ENCODE measurements at regions of chr12 and their contacts with region 1.

Region 1: GRCh38 chr12:14167005-14167628 is 185.7 kb upstream of the GRIN2B start:
- DNase-seq: no peak
- ATAC-seq: peak; percentile 70
- H3K4me3 ChIP-seq: no peak overlapping the region
- H3K27ac ChIP-seq: no peak overlapping the region
- H3K4me1 ChIP-seq: peaks cover 5% of the 10 kb centered on the region
- H3K27me3 ChIP-seq: no peaks in the 10 kb centered on the region
- CTCF ChIP-seq: peak; percentile 88 to 97 (median 94)
- EP300 ChIP-seq: no peak
- POLR2A ChIP-seq: no peak
- RAD21 ChIP-seq: peak; percentile 100

Region 2: GRCh38 chr12:13278249-13278787 is 888.8 kb before region 1 on chr12:
- CTCF ChIA-PET with region 1: interaction called, 7 read pairs
- POLR2A ChIA-PET with region 1: no interaction called
- RAD21 ChIA-PET with region 1: interaction called, 3 read pairs
- SMC1A ChIA-PET with region 1: no interaction called
- in situ Hi-C with region 1: no loop called
- intact Hi-C with region 1: loop called (anchors 5 kb)
- DNase-seq: no peak
- ATAC-seq: peak; percentile 93
- H3K4me3 ChIP-seq: no peak overlapping the region
- H3K27ac ChIP-seq: no peak overlapping the region
- H3K4me1 ChIP-seq: no peaks in the 10 kb centered on the region
- H3K27me3 ChIP-seq: peaks cover 0 to 7% of the 10 kb centered on the region in 2 experiments; a peak in 2 of 4 replicates
- CTCF ChIP-seq: peak; percentile 68 to 85 (median 75)
- EP300 ChIP-seq: no peak
- POLR2A ChIP-seq: no peak
- RAD21 ChIP-seq: peak; percentile 41

Region 3: GRCh38 chr12:13734584-13735152 is 432.4 kb before region 1 on chr12:
- CTCF ChIA-PET with region 1: no interaction called
- POLR2A ChIA-PET with region 1: no interaction called
- RAD21 ChIA-PET with region 1: no interaction called
- SMC1A ChIA-PET with region 1: no interaction called
- in situ Hi-C with region 1: no loop called
- intact Hi-C with region 1: loop called (anchors 5 kb)
- DNase-seq: no peak
- ATAC-seq: no peak
- H3K4me3 ChIP-seq: no peak overlapping the region
- H3K27ac ChIP-seq: no peak overlapping the region
- H3K4me1 ChIP-seq: no peaks in the 10 kb centered on the region
- H3K27me3 ChIP-seq: no peaks in the 10 kb centered on the region
- CTCF ChIP-seq: no peak
- EP300 ChIP-seq: no peak
- POLR2A ChIP-seq: no peak
- RAD21 ChIP-seq: no peak

Region 4: DNA sequence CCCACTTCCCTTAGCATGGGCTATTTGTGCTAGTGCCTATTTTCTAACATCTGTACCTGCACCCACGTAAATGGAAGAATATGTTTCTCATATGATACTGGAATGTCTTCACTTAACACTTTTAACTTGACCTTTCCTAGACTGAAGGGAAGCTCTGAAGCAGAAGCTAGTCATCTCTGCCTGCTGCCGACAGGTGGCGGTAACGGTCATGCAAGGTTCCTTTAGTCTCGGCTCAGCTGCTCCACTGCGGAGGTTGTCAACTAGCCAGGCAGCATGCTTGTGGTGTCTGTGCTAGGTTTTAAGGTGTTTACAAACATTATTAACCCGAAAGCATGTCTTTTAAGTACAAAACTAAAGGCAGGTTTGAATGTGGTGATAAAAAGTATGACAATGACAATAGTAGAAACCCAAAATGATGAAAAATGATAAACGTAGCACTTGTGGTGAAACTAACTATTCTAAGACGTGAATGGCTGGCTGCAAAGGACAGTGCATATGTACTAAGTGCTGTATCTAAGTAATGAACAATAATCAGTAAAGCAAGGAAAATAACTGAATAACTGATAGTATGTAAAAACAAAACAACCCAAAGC is 302.9 kb before region 1 on chr12:
- CTCF ChIA-PET with region 1: interaction called, 118 read pairs
- POLR2A ChIA-PET with region 1: no interaction called
- RAD21 ChIA-PET with region 1: interaction called, 49 read pairs
- SMC1A ChIA-PET with region 1: interaction called, 38 read pairs
- in situ Hi-C with region 1: loop called (anchors 5 kb)
- intact Hi-C with region 1: loop called (anchors 1 kb)
- DNase-seq: peak; percentile 11
- ATAC-seq: peak; percentile 94
- H3K4me3 ChIP-seq: no peak overlapping the region
- H3K27ac ChIP-seq: no peak overlapping the region
- H3K4me1 ChIP-seq: no peaks in the 10 kb centered on the region
- H3K27me3 ChIP-seq: no peaks in the 10 kb centered on the region; a peak in 1 of 4 replicates
- CTCF ChIP-seq: peak; percentile 88 to 96 (median 93)
- EP300 ChIP-seq: no peak
- POLR2A ChIP-seq: no peak
- RAD21 ChIP-seq: peak; percentile 74

Region 5: DNA sequence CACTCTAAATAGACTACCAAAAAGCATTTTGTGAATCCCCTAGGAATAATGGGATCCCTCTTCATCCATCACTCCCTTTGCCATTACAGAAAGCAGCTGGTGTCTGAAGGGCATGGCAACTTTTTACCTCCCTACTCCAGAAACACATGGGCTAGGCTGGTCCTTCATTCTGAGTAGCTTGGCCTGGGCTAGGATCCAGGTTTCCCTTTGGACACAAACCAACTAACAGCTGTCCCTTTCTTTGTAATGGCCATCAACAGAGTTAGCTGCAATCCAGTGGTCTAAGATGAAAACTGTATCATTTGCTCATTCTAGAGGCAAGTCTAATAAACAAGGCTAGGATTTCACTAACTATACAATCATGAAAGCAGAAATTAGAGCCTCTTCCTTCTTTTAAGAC is 193.1 kb before region 1 on chr12:
- CTCF ChIA-PET with region 1: interaction called, 14 read pairs
- POLR2A ChIA-PET with region 1: no interaction called
- RAD21 ChIA-PET with region 1: no interaction called
- SMC1A ChIA-PET with region 1: interaction called, 8 read pairs
- in situ Hi-C with region 1: loop called (anchors 10 kb)
- intact Hi-C with region 1: no loop called
- DNase-seq: no peak
- ATAC-seq: no peak
- H3K4me3 ChIP-seq: no peak overlapping the region
- H3K27ac ChIP-seq: no peak overlapping the region
- H3K4me1 ChIP-seq: no peaks in the 10 kb centered on the region
- H3K27me3 ChIP-seq: peaks cover 0 to 3% of the 10 kb centered on the region in 2 experiments; a peak in 2 of 4 replicates
- CTCF ChIP-seq: no peak
- EP300 ChIP-seq: no peak
- POLR2A ChIP-seq: no peak
- RAD21 ChIP-seq: no peak

Region 6: GRCh38 chr12:14138495-14138894 is 28.6 kb before region 1 on chr12:
- CTCF ChIA-PET with region 1: interaction called, 16 read pairs
- POLR2A ChIA-PET with region 1: no interaction called
- RAD21 ChIA-PET with region 1: interaction called, 5 read pairs
- SMC1A ChIA-PET with region 1: interaction called, 5 read pairs
- in situ Hi-C with region 1: no loop called
- intact Hi-C with region 1: no loop called
- DNase-seq: no peak
- ATAC-seq: peak; percentile 80
- H3K4me3 ChIP-seq: no peak overlapping the region
- H3K27ac ChIP-seq: no peak overlapping the region
- H3K4me1 ChIP-seq: no peaks in the 10 kb centered on the region
- H3K27me3 ChIP-seq: no peaks in the 10 kb centered on the region
- CTCF ChIP-seq: peak in 2 of 3 experiments; percentile 30 to 31; a peak in 2 of 6 replicates
- EP300 ChIP-seq: no peak
- POLR2A ChIP-seq: no peak
- RAD21 ChIP-seq: 0 out of 2 replicates have a peak, but pooled peaks have one; percentile 8

Region 7: GRCh38 chr12:14185427-14186192 is 18.5 kb after region 1 on chr12:
- CTCF ChIA-PET with region 1: interaction called, 49 read pairs
- POLR2A ChIA-PET with region 1: no interaction called
- RAD21 ChIA-PET with region 1: interaction called, 8 read pairs
- SMC1A ChIA-PET with region 1: interaction called, 18 read pairs
- in situ Hi-C with region 1: no loop called
- intact Hi-C with region 1: no loop called
- DNase-seq: no peak
- ATAC-seq: peak; percentile 91
- H3K4me3 ChIP-seq: no peak overlapping the region
- H3K27ac ChIP-seq: no peak overlapping the region
- H3K4me1 ChIP-seq: peaks cover 4% of the 10 kb centered on the region; the same call in 1 of the 2 replicates
- H3K27me3 ChIP-seq: no peaks in the 10 kb centered on the region
- CTCF ChIP-seq: peak; percentile 65 to 85 (median 68)
- EP300 ChIP-seq: no peak
- POLR2A ChIP-seq: no peak
- RAD21 ChIP-seq: peak; percentile 67

Region 8: DNA sequence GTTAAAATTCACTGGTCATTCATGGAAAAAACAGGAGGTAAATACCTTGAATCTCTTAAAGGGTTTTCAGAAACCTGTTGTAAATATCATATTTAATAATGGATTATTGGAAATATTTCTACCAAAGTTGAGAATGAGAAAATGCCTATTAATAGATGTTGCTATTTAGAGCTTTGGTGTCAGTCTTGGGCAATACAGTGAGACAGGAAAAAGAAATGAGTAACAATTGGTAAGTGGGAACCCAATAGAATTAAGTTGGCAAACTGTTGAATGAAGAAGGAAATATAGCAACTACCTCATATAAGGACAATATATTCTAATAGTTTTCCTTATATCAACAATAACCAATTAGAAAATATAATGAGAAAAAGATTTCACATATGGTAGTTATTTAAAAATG is 276.4 kb after region 1 on chr12:
- CTCF ChIA-PET with region 1: no interaction called
- POLR2A ChIA-PET with region 1: no interaction called
- RAD21 ChIA-PET with region 1: no interaction called
- SMC1A ChIA-PET with region 1: no interaction called
- in situ Hi-C with region 1: no loop called
- intact Hi-C with region 1: no loop called
- DNase-seq: no peak
- ATAC-seq: no peak
- H3K4me3 ChIP-seq: no peak overlapping the region
- H3K27ac ChIP-seq: no peak overlapping the region
- H3K4me1 ChIP-seq: no peaks in the 10 kb centered on the region
- H3K27me3 ChIP-seq: no peaks in the 10 kb centered on the region
- CTCF ChIP-seq: no peak
- EP300 ChIP-seq: no peak
- POLR2A ChIP-seq: no peak
- RAD21 ChIP-seq: no peak

Measured in GM12878 (cell line).